ENCODE measurements at regions of chr17 and their contacts with region 1.

Region 1: DNA sequence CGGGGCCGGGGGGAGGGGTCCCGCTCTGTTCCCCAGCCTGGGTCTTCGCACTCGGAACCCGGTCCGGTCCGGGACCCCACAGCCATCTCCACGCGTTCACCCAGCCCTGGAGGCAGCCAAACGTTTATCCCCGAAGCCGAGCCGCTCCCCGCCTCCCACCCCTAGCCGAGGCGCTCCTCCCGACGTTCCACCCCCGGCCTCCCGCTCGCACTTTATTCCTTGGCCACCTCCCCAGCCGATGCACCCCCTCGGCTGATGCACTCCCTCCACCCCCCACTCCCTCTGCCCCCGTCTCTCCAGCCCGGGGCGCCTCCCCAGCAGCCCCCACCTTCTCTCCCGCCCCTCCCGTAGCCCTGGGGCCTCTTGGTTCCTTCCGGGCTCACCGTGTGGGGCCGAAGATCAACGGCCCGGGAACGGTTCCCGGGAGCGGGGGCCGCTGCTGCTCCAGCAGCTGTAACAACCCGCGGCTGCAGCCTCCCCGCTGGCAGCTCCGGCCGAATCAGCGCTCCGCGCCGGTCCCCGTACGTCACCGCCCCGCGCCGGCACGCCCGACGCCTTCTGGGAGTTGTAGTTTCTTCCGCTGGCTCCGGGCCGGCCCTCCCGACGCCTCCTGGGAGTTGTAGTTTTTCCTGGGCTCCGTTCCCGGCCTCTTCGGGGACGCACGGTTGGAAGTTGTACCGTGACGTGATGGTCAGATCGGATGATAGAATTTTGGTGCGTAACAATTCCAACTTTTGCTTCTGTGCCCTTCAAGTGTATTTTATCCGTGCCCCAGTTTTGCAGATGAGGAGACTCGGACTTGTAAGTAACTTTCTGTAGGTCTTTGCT is at the starts of genes LRRC3C and ORMDL3:
- DNase-seq: peak; percentile 86 to 95 (median 92)
- ATAC-seq: peak; percentile 92
- H3K4me3 ChIP-seq: peak within 1 kb of the TSS; percentile 82
- H3K4me3 Mint-ChIP-seq: peak within 1 kb of the TSS; percentile 90 to 98 (median 92)
- H3K27ac ChIP-seq: peak within 1 kb of the TSS; percentile 87
- H3K27ac Mint-ChIP-seq: peak within 1 kb of the TSS; percentile 85 to 97 (median 93)
- H3K4me1 ChIP-seq: peaks cover 49 to 50% of the 10 kb centered on the region in 2 donors
- H3K4me1 Mint-ChIP-seq: peaks cover 20 to 59% (median 46%) of the 10 kb centered on the region in 7 donors
- H3K27me3 ChIP-seq: no peaks in the 10 kb centered on the region
- H3K27me3 Mint-ChIP-seq: no peaks in the 10 kb centered on the region
- total RNA-seq, gene LRRC3C: 0.27 TPM in 1 of 5 experiments, not detected in the others
- total RNA-seq, gene ORMDL3: 77.6 to 205 (median 110) TPM

Region 2: GRCh38 chr17:39636927-39637736 is 290.2 kb before region 1 on chr17 and contains the start of gene STARD3:
- CTCF ChIA-PET with region 1: no interaction called
- POLR2A ChIA-PET with region 1: no interaction called
- intact Hi-C with region 1: loop called (anchors 2 to 5 kb)
- DNase-seq: peak; percentile 80 to 92 (median 86)
- ATAC-seq: peak; percentile 95
- H3K4me3 ChIP-seq: peak within 1 kb of the TSS; percentile 86
- H3K4me3 Mint-ChIP-seq: peak within 1 kb of the TSS; percentile 89 to 98 (median 95)
- H3K27ac ChIP-seq: peak within 1 kb of the TSS; percentile 92
- H3K27ac Mint-ChIP-seq: peak within 1 kb of the TSS; percentile 76 to 97 (median 92)
- H3K4me1 ChIP-seq: peaks cover 43 to 49% of the 10 kb centered on the region in 2 donors
- H3K4me1 Mint-ChIP-seq: peaks cover 40 to 71% (median 60%) of the 10 kb centered on the region in 7 donors
- H3K27me3 ChIP-seq: no peaks in the 10 kb centered on the region
- H3K27me3 Mint-ChIP-seq: peaks cover 0 to under 1% (median 0%) of the 10 kb centered on the region in 5 donors
- total RNA-seq, gene STARD3: 69.8 to 143 (median 99.3) TPM

Region 3: DNA sequence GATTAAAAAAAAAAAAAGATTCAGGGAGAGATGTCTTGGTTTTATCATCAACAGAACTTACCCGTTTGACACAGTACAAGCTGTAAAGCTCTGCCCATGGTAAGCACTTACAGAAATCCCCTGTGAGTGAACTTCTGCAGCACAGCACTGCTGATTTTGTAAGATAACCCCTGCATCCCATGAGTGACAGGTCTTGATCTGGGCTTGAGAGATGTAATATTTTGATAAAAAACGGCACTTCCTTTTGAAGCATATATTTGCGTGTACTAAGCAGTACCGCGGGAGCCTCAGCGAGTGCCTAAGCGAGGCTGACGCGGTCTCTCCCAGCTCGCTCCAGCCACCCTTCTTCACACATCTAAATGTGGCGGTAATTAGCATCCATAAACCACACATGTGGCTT is 113.7 kb before region 1 on chr17:
- CTCF ChIA-PET with region 1: no interaction called
- POLR2A ChIA-PET with region 1: interaction called, 3 read pairs
- intact Hi-C with region 1: loop called in 1 of 2 experiments (anchors 2 kb)
- DNase-seq: peak in 7 of 9 donors; percentile 62 to 89 (median 71)
- ATAC-seq: peak; percentile 97
- H3K4me3 ChIP-seq: peak overlapping the region; percentile 17
- H3K4me3 Mint-ChIP-seq: peak overlapping the region; percentile 68 to 87 (median 78)
- H3K27ac ChIP-seq: peak overlapping the region; percentile 75
- H3K27ac Mint-ChIP-seq: peak overlapping the region; percentile 83 to 97 (median 91)
- H3K4me1 ChIP-seq: peaks cover 43 to 59% of the 10 kb centered on the region in 2 donors
- H3K4me1 Mint-ChIP-seq: peaks cover 32 to 94% (median 78%) of the 10 kb centered on the region in 7 donors
- H3K27me3 ChIP-seq: no peaks in the 10 kb centered on the region
- H3K27me3 Mint-ChIP-seq: no peaks in the 10 kb centered on the region

Region 4: GRCh38 chr17:39916918-39917317 is 10.4 kb before region 1 on chr17:
- CTCF ChIA-PET with region 1: interaction called, 3 read pairs
- POLR2A ChIA-PET with region 1: interaction called, 5 read pairs
- intact Hi-C with region 1: loop called in 1 of 2 experiments (anchors 1 kb)
- DNase-seq: no peak
- ATAC-seq: no peak
- H3K4me3 ChIP-seq: no peak overlapping the region
- H3K4me3 Mint-ChIP-seq: peak overlapping the region in 1 of 10 donors; percentile 21
- H3K27ac ChIP-seq: no peak overlapping the region
- H3K27ac Mint-ChIP-seq: peak overlapping the region in 2 of 9 donors; percentile 56 to 68
- H3K4me1 ChIP-seq: peaks cover 14 to 28% of the 10 kb centered on the region in 2 donors
- H3K4me1 Mint-ChIP-seq: peaks cover 10 to 55% (median 45%) of the 10 kb centered on the region in 7 donors
- H3K27me3 ChIP-seq: no peaks in the 10 kb centered on the region
- H3K27me3 Mint-ChIP-seq: no peaks in the 10 kb centered on the region

Region 5: DNA sequence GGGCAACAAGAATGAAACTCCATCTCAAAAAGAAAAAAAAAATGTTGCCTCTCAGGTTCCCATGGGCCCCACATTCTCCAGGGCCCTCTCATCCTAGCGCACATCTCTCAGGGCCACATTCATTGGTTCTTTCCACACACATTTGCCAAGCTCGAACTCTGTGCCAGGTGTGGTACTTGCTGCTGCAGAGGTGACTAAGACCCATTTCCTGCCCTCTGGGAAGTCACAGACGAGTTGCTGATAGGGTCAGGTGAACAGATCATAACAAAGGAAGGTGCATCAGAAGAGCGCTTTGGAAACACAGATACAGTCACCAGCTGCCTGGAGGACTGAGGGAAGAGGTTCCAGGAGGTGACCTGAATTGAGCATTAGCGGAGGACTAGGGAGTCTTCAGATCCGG is 36.5 kb after region 1 on chr17:
- CTCF ChIA-PET with region 1: interaction called, 3 read pairs
- POLR2A ChIA-PET with region 1: interaction called, 12 read pairs
- intact Hi-C with region 1: loop called in 1 of 2 experiments (anchors 1 kb)
- DNase-seq: peak in 4 of 9 donors; percentile 23 to 40 (median 28)
- ATAC-seq: no peak
- H3K4me3 ChIP-seq: no peak overlapping the region
- H3K4me3 Mint-ChIP-seq: peak overlapping the region in 9 of 10 donors; percentile 2 to 66 (median 39)
- H3K27ac ChIP-seq: no peak overlapping the region
- H3K27ac Mint-ChIP-seq: peak overlapping the region in 8 of 9 donors; percentile 40 to 96 (median 69)
- H3K4me1 ChIP-seq: peaks cover 13 to 28% of the 10 kb centered on the region in 2 donors
- H3K4me1 Mint-ChIP-seq: peaks cover 16 to 51% (median 35%) of the 10 kb centered on the region in 7 donors
- H3K27me3 ChIP-seq: no peaks in the 10 kb centered on the region
- H3K27me3 Mint-ChIP-seq: peaks cover 0 to 16% (median 0%) of the 10 kb centered on the region in 5 donors

Region 6: DNA sequence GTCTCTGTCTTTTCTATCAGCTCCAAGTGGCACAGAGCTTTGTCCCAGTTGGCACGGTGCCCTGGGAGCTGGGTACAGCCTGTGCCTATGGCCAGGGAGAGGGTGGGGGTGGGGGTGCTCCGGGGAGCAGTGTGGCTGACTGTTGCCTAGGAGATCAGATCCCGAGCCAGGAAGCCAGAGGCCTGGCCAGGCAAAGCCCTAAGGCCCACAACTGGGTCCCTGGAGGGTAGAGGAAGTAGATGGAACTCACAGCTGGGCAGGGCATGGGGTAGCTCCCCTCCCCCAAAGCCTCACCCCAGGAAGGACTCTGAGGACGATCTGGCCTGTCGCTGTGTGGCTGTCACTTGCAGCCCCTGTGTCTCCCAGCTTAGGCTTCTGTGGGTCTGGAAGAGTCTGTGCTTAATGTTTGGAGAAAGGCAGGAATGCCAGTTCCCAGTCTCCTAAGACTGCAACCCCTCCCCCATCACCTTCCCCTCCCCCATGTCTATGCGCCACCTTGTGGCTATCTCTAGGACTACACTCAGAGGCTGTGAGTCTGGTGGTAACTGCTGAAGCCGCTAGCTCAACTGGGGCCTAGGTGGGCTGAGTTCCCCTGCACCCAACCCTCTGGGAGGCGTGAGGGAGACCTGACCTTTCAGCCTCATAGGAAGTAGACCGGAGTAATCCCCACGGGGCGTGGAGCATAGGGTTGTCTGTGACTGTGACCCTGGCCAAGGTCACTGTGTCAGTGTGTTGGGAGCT is 148.1 kb after region 1 on chr17:
- CTCF ChIA-PET with region 1: no interaction called
- POLR2A ChIA-PET with region 1: no interaction called
- intact Hi-C with region 1: no loop called
- DNase-seq: peak; percentile 45 to 80 (median 63)
- ATAC-seq: peak; percentile 93
- H3K4me3 ChIP-seq: no peak overlapping the region
- H3K4me3 Mint-ChIP-seq: peak overlapping the region in 8 of 10 donors; percentile 35 to 78 (median 71)
- H3K27ac ChIP-seq: peak overlapping the region; percentile 18
- H3K27ac Mint-ChIP-seq: peak overlapping the region in 8 of 9 donors; percentile 42 to 89 (median 68)
- H3K4me1 ChIP-seq: peaks cover 13 to 36% of the 10 kb centered on the region in 2 donors
- H3K4me1 Mint-ChIP-seq: peaks cover 7 to 67% (median 36%) of the 10 kb centered on the region in 7 donors
- H3K27me3 ChIP-seq: no peaks in the 10 kb centered on the region
- H3K27me3 Mint-ChIP-seq: no peaks in the 10 kb centered on the region

Region 7: GRCh38 chr17:41026715-41027471 is 1099.6 kb after region 1 on chr17 and contains the start of gene KRTAP1-5:
- CTCF ChIA-PET with region 1: no interaction called
- POLR2A ChIA-PET with region 1: no interaction called
- intact Hi-C with region 1: no loop called
- DNase-seq: no peak
- ATAC-seq: no peak
- H3K4me3 ChIP-seq: no peak within 1 kb of the TSS
- H3K4me3 Mint-ChIP-seq: no peak within 1 kb of the TSS
- H3K27ac ChIP-seq: no peak within 1 kb of the TSS
- H3K27ac Mint-ChIP-seq: no peak within 1 kb of the TSS
- H3K4me1 ChIP-seq: no peaks in the 10 kb centered on the region
- H3K4me1 Mint-ChIP-seq: no peaks in the 10 kb centered on the region
- H3K27me3 ChIP-seq: no peaks in the 10 kb centered on the region
- H3K27me3 Mint-ChIP-seq: peaks cover 16 to 30% (median 23%) of the 10 kb centered on the region in 5 donors
- total RNA-seq, gene KRTAP1-5: not detected